ENCODE measurements at regions of chrX and their contacts with region 1.

Region 1: DNA sequence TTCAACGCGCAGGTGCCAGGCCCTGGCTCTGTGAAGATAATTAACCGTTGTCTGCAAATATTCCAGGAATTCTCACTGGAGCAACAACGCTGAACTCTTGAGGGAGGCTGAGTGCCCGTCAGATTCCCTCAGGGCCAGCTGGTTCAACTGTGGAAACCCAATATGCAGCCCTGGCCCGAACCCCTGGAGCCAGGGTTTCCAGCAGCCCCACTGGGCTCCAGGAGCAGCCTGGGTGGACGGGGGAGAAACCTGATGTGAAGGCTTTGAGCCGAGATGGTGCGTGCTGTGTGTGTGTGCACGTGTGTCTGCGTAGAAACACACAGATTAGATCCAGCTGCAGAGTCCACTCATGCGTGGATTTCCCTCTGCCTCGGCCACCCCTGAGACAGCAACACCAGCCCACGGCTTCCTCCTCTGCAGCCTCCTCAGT is 19.4 kb upstream of the SLC25A6 start:
- DNase-seq: peak; percentile 36

Region 2: DNA sequence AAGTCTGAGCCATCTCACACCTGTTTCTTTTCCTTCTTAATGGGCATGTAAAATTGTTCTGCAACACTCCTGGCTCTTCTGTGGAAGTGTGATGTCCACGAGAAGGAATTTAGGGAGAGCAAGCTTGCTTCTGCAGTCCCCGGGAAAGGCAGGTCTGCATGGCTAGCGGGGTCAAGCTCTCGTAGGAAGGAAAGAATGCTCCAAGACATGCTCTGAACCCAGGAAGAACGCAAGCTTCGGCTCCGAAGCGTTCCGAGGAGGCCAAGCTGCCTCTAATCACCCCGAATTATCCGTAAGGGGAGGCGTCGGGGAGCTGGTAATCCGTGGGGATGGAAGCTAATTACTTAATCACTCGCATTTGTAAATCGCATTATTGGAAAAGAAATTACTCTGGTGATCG is 376.6 kb before region 1 on chrX:
- intact Hi-C with region 1: loop called in 1 of 2 experiments (anchors 5 kb)
- DNase-seq: peak; percentile 8

Region 3: DNA sequence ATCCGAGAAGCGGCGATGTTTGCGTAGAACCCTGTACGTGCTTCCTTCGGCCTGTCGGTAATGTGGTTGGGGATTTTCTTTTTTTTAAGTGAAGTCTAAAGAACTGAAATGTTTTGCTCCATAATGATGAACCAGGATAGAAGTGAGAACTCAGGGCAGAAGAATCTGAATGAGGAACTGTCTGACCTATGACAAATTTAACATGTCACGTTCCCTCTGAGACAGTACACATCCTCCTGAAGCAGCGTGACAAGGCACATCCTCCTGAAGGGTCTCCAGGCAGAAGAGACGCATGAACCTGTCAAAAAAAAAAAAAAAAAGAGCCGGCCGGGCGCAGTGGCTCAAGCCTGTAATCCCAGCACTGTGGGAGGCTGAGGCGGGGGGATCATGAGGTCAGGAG is 136.5 kb before region 1 on chrX:
- intact Hi-C with region 1: no loop called
- DNase-seq: peak; percentile 24

Region 4: DNA sequence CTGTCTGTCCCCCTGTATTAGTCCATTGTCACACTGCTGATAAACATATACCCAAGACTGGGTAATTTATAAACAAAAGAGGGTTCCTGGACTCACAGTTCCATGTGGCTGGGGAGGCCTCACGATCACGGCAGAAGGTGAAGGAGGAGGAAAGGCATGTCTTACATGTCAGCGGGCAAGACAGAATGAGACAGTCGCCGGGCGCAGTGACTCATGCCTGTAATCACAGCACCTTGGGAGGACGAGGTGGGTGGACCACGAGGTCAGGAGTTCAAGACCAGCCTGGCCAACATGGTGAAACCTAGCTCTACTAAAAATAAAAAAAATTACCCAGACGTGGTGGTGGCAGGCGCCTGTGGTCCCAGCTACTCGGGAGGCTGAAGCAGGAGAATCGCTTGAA is 50.0 kb before region 1 on chrX:
- intact Hi-C with region 1: no loop called
- DNase-seq: peak; percentile 73

Measured in posterior vena cava (tissue), 2 donors.